B cell (primary cell): ENCODE measurements at regions of chr4 and their contacts with region 1.

Region 1: DNA sequence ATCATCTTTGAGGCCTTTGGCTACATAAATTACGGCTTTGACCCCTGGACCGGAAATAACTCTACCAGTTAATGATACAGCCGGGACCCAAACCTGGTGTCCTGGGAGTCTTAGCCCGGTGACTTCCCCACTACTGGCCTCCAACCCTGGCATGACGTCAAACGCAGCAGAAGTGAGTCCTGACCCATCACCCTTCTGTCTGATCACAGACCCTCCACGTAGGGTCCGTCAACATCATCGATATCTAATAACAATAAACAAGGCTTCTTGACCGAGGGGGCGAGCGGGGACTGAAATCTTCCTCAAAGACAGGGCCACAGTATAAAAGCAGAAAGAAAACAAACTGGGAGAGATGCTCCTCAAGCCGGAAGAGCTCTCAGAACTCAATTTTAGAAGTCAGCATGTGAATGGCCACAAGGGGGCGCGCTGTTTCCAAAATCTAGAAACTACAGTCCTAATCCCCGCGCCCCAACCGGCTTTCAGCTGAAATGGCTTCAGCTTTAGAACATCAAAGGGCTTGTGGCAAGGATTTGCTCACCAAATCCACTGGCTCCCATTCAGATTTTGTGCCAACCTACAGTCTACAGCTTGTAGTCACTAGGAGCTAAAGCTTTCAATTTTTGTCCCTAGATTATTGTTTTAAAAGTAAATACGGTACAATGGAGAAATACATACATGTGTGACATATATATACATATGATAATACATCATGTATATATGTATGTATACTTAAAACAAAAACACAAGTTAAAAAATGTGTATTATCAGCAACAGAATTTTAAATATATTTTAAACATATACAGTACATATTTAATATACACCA is 46.4 kb upstream of the ENPP6 start:
- DNase-seq: peak; percentile 93
- ATAC-seq: peak; percentile 42
- H3K4me3 ChIP-seq: no peak overlapping the region
- H3K4me3 Mint-ChIP-seq: peak overlapping the region; percentile 42
- H3K27ac ChIP-seq: peak overlapping the region in 1 of 2 donors; percentile 24
- H3K27ac Mint-ChIP-seq: peak overlapping the region; percentile 51
- H3K4me1 ChIP-seq: peaks cover 32 to 37% of the 10 kb centered on the region in 2 donors
- H3K4me1 Mint-ChIP-seq: peaks cover 41% of the 10 kb centered on the region
- H3K27me3 ChIP-seq: no peaks in the 10 kb centered on the region
- H3K27me3 Mint-ChIP-seq: no peaks in the 10 kb centered on the region
- CTCF ChIP-seq: peak; percentile 86

Region 2: GRCh38 chr4:183182873-183183725 is 1081.0 kb before region 1 on chr4:
- CTCF ChIA-PET with region 1: no interaction called
- POLR2A ChIA-PET with region 1: no interaction called
- intact Hi-C with region 1: no loop called
- DNase-seq: no peak
- ATAC-seq: no peak
- H3K4me3 ChIP-seq: no peak overlapping the region
- H3K4me3 Mint-ChIP-seq: no peak overlapping the region
- H3K27ac ChIP-seq: no peak overlapping the region
- H3K27ac Mint-ChIP-seq: no peak overlapping the region
- H3K4me1 ChIP-seq: no peaks in the 10 kb centered on the region
- H3K4me1 Mint-ChIP-seq: no peaks in the 10 kb centered on the region
- H3K27me3 ChIP-seq: no peaks in the 10 kb centered on the region
- H3K27me3 Mint-ChIP-seq: no peaks in the 10 kb centered on the region
- CTCF ChIP-seq: no peak

Region 3: GRCh38 chr4:184282251-184282713 is 18.2 kb after region 1 on chr4:
- CTCF ChIA-PET with region 1: interaction called, 137 read pairs
- POLR2A ChIA-PET with region 1: interaction called, 6 read pairs
- intact Hi-C with region 1: loop called (anchors 1 kb)
- DNase-seq: peak; percentile 62
- ATAC-seq: peak; percentile 72
- H3K4me3 ChIP-seq: no peak overlapping the region
- H3K4me3 Mint-ChIP-seq: peak overlapping the region; percentile 77
- H3K27ac ChIP-seq: peak overlapping the region; percentile 28 to 73
- H3K27ac Mint-ChIP-seq: peak overlapping the region; percentile 90
- H3K4me1 ChIP-seq: peaks cover 48% of the 10 kb centered on the region in 2 donors
- H3K4me1 Mint-ChIP-seq: peaks cover 58% of the 10 kb centered on the region
- H3K27me3 ChIP-seq: no peaks in the 10 kb centered on the region
- H3K27me3 Mint-ChIP-seq: no peaks in the 10 kb centered on the region
- CTCF ChIP-seq: peak; percentile 34

Region 4: GRCh38 chr4:184384056-184384809 is 120.1 kb after region 1 on chr4:
- CTCF ChIA-PET with region 1: interaction called, 6 read pairs
- POLR2A ChIA-PET with region 1: no interaction called
- intact Hi-C with region 1: loop called (anchors 2 kb)
- DNase-seq: peak; percentile 71
- ATAC-seq: peak; percentile 57
- H3K4me3 ChIP-seq: peak overlapping the region; percentile 30 to 59 (median 50)
- H3K4me3 Mint-ChIP-seq: peak overlapping the region; percentile 81
- H3K27ac ChIP-seq: peak overlapping the region; percentile 60 to 76
- H3K27ac Mint-ChIP-seq: peak overlapping the region; percentile 85
- H3K4me1 ChIP-seq: peaks cover 79 to 88% of the 10 kb centered on the region in 2 donors
- H3K4me1 Mint-ChIP-seq: peaks cover 85% of the 10 kb centered on the region
- H3K27me3 ChIP-seq: no peaks in the 10 kb centered on the region
- H3K27me3 Mint-ChIP-seq: no peaks in the 10 kb centered on the region
- CTCF ChIP-seq: no peak

Region 5: DNA sequence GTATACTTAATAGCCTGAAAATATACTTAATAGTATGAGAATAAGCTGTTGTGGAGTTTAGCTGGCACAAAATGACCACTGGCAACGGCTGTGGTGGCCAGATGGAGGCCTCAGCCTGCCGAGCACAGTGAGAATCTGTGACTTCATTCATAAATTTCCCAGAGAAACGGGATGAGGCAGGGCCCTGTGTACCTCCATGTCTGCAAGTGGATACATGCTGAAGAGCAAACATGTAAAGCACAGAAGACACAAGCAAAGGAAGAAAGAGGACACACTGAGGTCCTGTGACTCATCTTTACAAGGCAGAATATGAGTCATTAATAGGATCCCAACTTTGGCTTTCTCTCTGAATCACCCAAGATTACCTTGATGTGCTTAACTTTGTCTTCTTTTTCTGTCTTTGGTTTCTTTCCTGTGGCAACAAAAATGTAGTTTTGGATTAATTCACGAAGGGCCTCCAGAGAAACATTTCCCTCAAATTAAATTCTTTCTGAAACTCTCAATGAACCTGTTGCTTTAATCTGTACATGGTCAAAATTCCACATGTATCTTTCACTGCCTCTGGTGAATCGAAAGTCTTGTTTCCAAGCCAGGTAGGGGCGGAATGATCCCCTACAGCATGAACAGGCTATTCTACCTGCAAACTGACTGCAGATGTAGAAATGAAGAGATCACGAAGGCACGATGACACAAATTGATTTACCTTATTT is 153.8 kb after region 1 on chr4:
- CTCF ChIA-PET with region 1: interaction called, 11 read pairs
- POLR2A ChIA-PET with region 1: interaction called, 3 read pairs
- intact Hi-C with region 1: loop called (anchors 1 kb)
- DNase-seq: peak; percentile 16
- ATAC-seq: peak; percentile 43
- H3K4me3 ChIP-seq: peak overlapping the region in 2 of 5 experiments; percentile 12 to 55
- H3K4me3 Mint-ChIP-seq: peak overlapping the region; percentile 48
- H3K27ac ChIP-seq: peak overlapping the region; percentile 79 to 84
- H3K27ac Mint-ChIP-seq: peak overlapping the region; percentile 91
- H3K4me1 ChIP-seq: peaks cover 45 to 57% of the 10 kb centered on the region in 2 donors
- H3K4me1 Mint-ChIP-seq: peaks cover 78% of the 10 kb centered on the region
- H3K27me3 ChIP-seq: no peaks in the 10 kb centered on the region
- H3K27me3 Mint-ChIP-seq: no peaks in the 10 kb centered on the region
- CTCF ChIP-seq: no peak

Region 6: GRCh38 chr4:184538023-184538599 is 274.0 kb after region 1 on chr4:
- CTCF ChIA-PET with region 1: interaction called, 31 read pairs
- POLR2A ChIA-PET with region 1: interaction called, 7 read pairs
- intact Hi-C with region 1: loop called (anchors 1 kb)
- DNase-seq: peak; percentile 90
- ATAC-seq: peak; percentile 71
- H3K4me3 ChIP-seq: peak overlapping the region; percentile 74 to 98 (median 81)
- H3K4me3 Mint-ChIP-seq: peak overlapping the region; percentile 96
- H3K27ac ChIP-seq: peak overlapping the region; percentile 98
- H3K27ac Mint-ChIP-seq: peak overlapping the region; percentile 100
- H3K4me1 ChIP-seq: peaks cover 33 to 38% of the 10 kb centered on the region in 2 donors
- H3K4me1 Mint-ChIP-seq: peaks cover 42% of the 10 kb centered on the region
- H3K27me3 ChIP-seq: no peaks in the 10 kb centered on the region
- H3K27me3 Mint-ChIP-seq: no peaks in the 10 kb centered on the region
- CTCF ChIP-seq: peak; percentile 61

Region 7: DNA sequence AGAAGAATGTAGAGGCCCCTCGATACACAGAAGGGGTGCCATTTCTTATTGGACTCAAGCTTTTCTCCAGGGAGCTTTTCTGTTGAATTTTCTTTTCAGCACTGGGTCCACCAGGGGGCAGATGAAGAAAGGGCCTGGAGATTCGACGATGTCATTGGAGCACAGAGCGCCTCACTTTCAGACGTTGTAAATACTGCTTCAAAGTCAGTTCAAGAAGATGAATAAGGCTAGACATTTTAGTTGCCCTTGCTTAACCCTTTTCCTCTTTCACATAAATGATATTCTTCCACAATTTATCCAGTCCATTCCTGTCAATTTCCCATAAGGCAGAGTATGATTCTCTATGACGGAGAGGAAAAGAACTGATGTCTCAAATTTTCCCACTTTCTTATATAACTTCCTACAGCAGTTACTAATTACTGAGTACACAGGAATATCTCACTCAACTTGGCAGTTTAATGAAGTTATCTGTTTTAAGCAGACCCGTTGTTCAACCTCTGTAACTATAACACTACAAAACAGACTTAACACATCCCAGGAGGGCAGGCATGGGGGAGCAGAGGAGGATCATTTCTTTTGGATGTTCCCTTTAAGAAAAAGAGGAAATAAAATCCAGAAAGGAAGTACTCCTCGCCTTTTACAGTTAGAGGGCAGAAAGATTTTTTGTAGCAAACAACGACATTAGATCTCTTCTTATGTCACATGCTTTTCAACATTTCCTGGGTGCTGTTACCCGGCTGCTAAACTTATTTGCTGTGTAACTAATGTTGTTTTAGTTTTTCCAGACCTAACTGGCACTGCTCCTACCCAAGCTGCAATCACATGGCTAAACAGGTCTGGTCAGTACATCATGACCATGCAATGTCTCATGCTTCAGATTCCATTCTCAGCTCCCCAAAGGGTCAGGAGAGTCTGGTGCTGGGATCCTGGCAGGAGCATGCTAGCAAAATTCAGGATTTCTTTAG is 482.0 kb after region 1 on chr4:
- CTCF ChIA-PET with region 1: interaction called, 20 read pairs
- POLR2A ChIA-PET with region 1: no interaction called
- intact Hi-C with region 1: loop called (anchors 5 kb)
- DNase-seq: peak; percentile 79
- ATAC-seq: peak; percentile 90
- H3K4me3 ChIP-seq: no peak overlapping the region
- H3K4me3 Mint-ChIP-seq: peak overlapping the region; percentile 55
- H3K27ac ChIP-seq: no peak overlapping the region
- H3K27ac Mint-ChIP-seq: peak overlapping the region; percentile 53
- H3K4me1 ChIP-seq: peaks cover 8 to 12% of the 10 kb centered on the region in 2 donors
- H3K4me1 Mint-ChIP-seq: peaks cover 11% of the 10 kb centered on the region
- H3K27me3 ChIP-seq: no peaks in the 10 kb centered on the region
- H3K27me3 Mint-ChIP-seq: no peaks in the 10 kb centered on the region
- CTCF ChIP-seq: peak; percentile 82

Region 8: GRCh38 chr4:185005216-185005819 is 741.2 kb after region 1 on chr4:
- CTCF ChIA-PET with region 1: no interaction called
- POLR2A ChIA-PET with region 1: no interaction called
- intact Hi-C with region 1: loop called (anchors 10 kb)
- DNase-seq: peak; percentile 83
- ATAC-seq: peak; percentile 93
- H3K4me3 ChIP-seq: no peak overlapping the region
- H3K4me3 Mint-ChIP-seq: peak overlapping the region; percentile 50
- H3K27ac ChIP-seq: no peak overlapping the region
- H3K27ac Mint-ChIP-seq: no peak overlapping the region
- H3K4me1 ChIP-seq: peaks cover 7 to 10% of the 10 kb centered on the region in 2 donors
- H3K4me1 Mint-ChIP-seq: peaks cover 6% of the 10 kb centered on the region
- H3K27me3 ChIP-seq: peaks cover 0 to 32% (median 9%) of the 10 kb centered on the region in 4 experiments
- H3K27me3 Mint-ChIP-seq: peaks cover 56% of the 10 kb centered on the region
- CTCF ChIP-seq: peak; percentile 97